PC-9 (cell line): ENCODE measurements at regions of chr3 and their contacts with region 1.

Region 1: GRCh38 chr3:118501152-118501551 is 533.5 kb downstream of the IGSF11 start:
- DNase-seq: peak in 1 of 2 experiments; percentile 57
- H3K4me3 ChIP-seq: no peak overlapping the region
- H3K27ac ChIP-seq: no peak overlapping the region
- H3K4me1 ChIP-seq: no peaks in the 10 kb centered on the region
- H3K27me3 ChIP-seq: no peaks in the 10 kb centered on the region
- CTCF ChIP-seq: no peak

Region 2: DNA sequence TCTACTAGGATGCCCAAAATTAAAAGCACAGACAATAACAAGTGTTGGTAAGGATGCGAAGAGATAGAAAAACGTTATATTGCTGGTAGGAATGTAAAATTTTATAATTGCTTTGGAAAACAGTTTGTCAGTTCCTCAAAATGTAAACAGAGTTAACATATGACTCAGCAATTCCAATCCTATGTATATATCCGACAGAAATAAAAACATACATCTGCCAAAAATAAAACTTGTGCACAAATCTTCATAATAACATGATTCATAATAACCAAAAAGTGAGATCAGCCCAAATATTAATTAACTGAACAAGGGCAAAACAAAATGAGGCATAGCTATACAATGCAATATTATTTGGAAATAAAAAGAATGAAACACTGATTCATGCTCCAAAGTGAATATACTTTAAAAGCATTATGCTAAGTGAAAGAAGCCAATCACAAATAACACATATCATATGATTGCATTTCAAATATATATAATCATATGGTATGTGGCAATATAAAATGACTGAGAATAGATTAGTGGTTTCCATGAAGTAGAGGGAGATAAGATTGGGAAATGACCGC is 75.8 kb before region 1 on chr3:
- CTCF ChIA-PET with region 1: no interaction called
- POLR2A ChIA-PET with region 1: no interaction called
- intact Hi-C with region 1: no loop called
- DNase-seq: no peak
- H3K4me3 ChIP-seq: no peak overlapping the region
- H3K27ac ChIP-seq: no peak overlapping the region
- H3K4me1 ChIP-seq: 0 out of 2 replicates have a peak, but pooled peaks cover 6% of the 10 kb centered on the region
- H3K27me3 ChIP-seq: no peaks in the 10 kb centered on the region
- CTCF ChIP-seq: no peak

Region 3: DNA sequence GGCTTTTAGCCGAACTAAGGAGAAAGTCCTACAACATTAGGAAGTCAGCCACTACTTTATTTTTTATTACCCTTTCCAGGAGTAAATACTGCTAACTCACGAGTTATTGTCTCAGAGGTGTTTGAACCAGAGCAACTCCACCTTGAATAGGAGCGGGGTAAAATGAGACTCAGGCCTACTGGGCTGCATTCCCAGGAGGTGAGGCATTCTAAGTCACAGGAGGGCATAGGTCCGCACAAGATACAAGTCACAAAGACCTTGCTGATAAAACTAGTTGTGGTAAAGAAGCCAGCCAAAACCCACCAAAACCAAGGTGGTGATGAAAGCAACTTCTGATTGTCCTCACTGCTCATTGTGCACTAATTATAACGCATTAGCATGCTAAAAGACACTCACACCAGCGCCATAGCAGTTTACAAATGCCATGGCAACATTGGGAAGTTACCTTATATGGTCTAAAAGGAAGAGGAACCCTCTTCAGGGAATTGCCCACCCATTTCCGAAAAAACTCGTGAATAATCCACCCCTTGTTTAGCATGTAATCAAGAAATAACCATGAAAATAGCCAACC is 22.4 kb before region 1 on chr3:
- CTCF ChIA-PET with region 1: no interaction called
- POLR2A ChIA-PET with region 1: no interaction called
- intact Hi-C with region 1: loop called (anchors 2 kb)
- DNase-seq: peak; percentile 71 to 75
- H3K4me3 ChIP-seq: peak overlapping the region; percentile 13; the same call in 1 of the 2 replicates
- H3K27ac ChIP-seq: peak overlapping the region; percentile 73
- H3K4me1 ChIP-seq: peaks cover 15% of the 10 kb centered on the region
- H3K27me3 ChIP-seq: no peaks in the 10 kb centered on the region
- CTCF ChIP-seq: no peak

Region 4: GRCh38 chr3:118548434-118548833 is 47.3 kb after region 1 on chr3:
- CTCF ChIA-PET with region 1: no interaction called
- POLR2A ChIA-PET with region 1: no interaction called
- intact Hi-C with region 1: loop called (anchors 5 kb)
- DNase-seq: no peak
- H3K4me3 ChIP-seq: no peak overlapping the region
- H3K27ac ChIP-seq: no peak overlapping the region
- H3K4me1 ChIP-seq: peaks cover 7% of the 10 kb centered on the region
- H3K27me3 ChIP-seq: no peaks in the 10 kb centered on the region
- CTCF ChIP-seq: no peak